Activated CD4-positive, alpha-beta T cell treated with anti-CD3 and anti-CD28 coated beads, Interleukin-2, amount 10 ng/mL, durations not matched to agents 24 days and 14 days (primary cell): ENCODE measurements at regions of chr6 and their contacts with region 1.

Region 1: GRCh38 chr6:24431045-24431451 is 28.3 kb downstream of the MRS2 start:
- DNase-seq: peak; percentile 75
- H3K4me3 Mint-ChIP-seq: no peak overlapping the region
- H3K27ac Mint-ChIP-seq: no peak overlapping the region
- H3K4me1 Mint-ChIP-seq: no peaks in the 10 kb centered on the region
- H3K27me3 Mint-ChIP-seq: no peaks in the 10 kb centered on the region

Region 2: GRCh38 chr6:24520929-24521546 is 90.0 kb after region 1 on chr6:
- intact Hi-C with region 1: loop called (anchors 2 kb)
- DNase-seq: peak; percentile 78
- H3K4me3 Mint-ChIP-seq: no peak overlapping the region
- H3K27ac Mint-ChIP-seq: no peak overlapping the region
- H3K4me1 Mint-ChIP-seq: peaks cover 18% of the 10 kb centered on the region
- H3K27me3 Mint-ChIP-seq: no peaks in the 10 kb centered on the region

Region 3: DNA sequence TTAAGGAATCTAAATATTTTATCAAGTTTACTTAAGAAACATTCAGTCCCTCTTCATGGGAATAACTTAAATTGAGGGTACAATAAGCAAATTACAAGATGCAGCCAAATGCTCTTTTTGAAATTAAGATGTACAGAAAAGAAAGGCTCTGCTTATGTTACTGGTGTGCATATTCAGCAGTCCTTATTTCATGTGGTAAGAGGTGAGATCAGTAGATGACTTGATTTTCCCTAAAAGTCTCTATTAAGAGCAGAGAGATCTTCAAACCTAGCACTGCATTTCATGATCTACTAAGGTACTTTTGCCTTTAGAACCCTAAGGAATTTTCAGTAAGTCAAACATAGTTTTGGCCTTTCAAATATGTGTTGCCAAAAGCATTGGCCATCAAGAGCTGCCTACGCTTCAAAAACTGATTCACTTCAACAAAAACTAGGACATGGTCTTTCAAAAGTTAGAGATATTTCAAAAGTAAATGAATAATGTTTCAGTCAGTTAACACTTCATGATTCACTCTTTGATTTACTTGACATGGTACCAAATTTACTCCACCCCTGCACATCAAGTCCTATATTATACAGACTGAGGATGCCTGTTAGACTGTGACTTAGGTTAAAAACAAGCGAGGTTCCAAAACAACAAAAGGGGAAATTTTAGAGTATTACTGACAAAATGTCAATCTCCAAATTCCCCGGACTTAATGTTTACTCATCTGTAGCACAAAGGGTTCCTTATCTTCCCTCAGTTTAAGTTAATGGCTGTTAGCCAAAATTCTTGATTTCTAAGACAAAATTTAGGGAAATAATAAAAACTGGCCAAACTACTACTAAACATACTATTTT is 268.7 kb after region 1 on chr6:
- intact Hi-C with region 1: loop called (anchors 5 kb)
- DNase-seq: no peak
- H3K4me3 Mint-ChIP-seq: no peak overlapping the region
- H3K27ac Mint-ChIP-seq: peak overlapping the region; percentile 71
- H3K4me1 Mint-ChIP-seq: peaks cover 21% of the 10 kb centered on the region
- H3K27me3 Mint-ChIP-seq: no peaks in the 10 kb centered on the region